ENCODE measurements at regions of chr12 and their contacts with region 1.

Region 1: GRCh38 chr12:45990468-45991283 is at the start of gene SCAF11:
- DNase-seq: peak; percentile 100
- H3K4me3 Mint-ChIP-seq: peak within 1 kb of the TSS; percentile 94
- H3K27ac Mint-ChIP-seq: peak within 1 kb of the TSS; percentile 99
- H3K4me1 Mint-ChIP-seq: peaks cover 36% of the 10 kb centered on the region
- H3K27me3 Mint-ChIP-seq: no peaks in the 10 kb centered on the region
- total RNA-seq, gene SCAF11: 95.0 to 97.7 TPM

Region 2: GRCh38 chr12:45518291-45519235 is 472.1 kb before region 1 on chr12:
- CTCF ChIA-PET with region 1: no interaction called
- intact Hi-C with region 1: loop called (anchors 1 kb)
- DNase-seq: peak; percentile 83
- H3K4me3 Mint-ChIP-seq: peak overlapping the region; percentile 40
- H3K27ac Mint-ChIP-seq: peak overlapping the region; percentile 85
- H3K4me1 Mint-ChIP-seq: peaks cover 12% of the 10 kb centered on the region
- H3K27me3 Mint-ChIP-seq: no peaks in the 10 kb centered on the region

Region 3: DNA sequence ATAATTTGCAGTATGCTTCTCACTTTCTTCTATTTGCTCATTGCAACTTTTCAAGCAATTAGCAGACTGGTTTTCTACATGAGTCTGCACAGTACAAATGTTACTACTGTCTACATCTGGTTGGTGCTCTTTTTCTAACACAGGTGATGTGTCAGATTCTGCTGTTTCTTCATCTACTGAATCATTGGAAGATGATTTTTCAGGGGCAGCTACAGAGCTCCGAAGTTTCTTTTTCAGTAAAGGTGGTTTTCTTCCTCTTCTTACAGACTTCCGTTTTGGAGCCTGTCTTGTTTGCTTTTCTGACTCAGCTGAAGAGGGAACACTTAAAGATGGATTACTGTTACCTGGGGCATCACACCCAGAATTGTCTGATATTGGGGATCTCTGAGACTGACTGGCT is 62.4 kb before region 1 on chr12:
- CTCF ChIA-PET with region 1: no interaction called
- intact Hi-C with region 1: loop called (anchors 2 kb)
- DNase-seq: no peak
- H3K4me3 Mint-ChIP-seq: no peak overlapping the region
- H3K27ac Mint-ChIP-seq: peak overlapping the region; percentile 52
- H3K4me1 Mint-ChIP-seq: peaks cover 11% of the 10 kb centered on the region
- H3K27me3 Mint-ChIP-seq: no peaks in the 10 kb centered on the region

Region 4: DNA sequence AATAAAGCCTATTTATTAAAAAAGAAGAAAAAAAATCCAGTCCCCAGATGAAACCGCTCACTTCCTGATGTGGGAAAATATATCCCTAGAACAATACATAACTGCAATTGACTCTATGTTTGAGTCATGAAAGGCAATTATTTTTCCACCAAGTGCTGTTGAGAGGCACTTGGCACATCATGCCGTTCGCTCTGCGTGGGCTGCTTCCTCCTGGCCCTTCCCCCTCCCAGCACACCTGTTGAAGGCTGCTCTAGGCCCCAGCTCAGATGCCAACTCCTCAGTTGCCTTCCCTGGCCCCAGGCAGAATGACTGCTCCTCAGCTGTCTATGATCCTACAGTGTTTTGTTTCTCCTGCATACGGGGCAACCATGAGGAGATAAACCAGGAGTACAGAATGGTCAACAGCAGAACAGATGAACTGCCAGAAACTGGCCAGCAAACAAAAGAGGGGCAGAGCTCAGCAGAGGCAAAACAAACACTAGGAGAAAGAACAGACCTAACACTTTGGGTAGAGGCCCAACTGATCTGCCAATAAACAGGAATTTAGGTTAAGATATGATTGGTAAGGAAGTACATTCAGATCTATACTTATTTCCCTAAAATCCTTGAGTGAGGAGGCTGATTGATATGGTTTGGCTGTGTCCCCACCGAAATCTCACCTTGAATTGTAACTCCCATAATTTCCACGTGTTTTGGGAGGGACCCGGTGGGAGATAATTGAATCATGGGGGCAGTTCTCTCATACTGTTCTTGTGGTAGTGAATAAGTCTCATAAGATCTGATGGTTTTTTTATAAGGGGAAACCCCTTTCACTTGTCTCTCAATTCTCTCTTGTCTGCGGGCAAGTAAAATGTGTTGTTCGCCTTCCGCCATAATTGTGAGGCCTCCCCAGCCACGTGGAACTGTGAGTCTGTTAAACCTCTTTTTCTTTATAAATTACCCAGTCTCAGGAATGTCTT is 219.5 kb after region 1 on chr12:
- CTCF ChIA-PET with region 1: interaction called, 4 read pairs
- intact Hi-C with region 1: loop called (anchors 1 kb)
- DNase-seq: peak; percentile 87
- H3K4me3 Mint-ChIP-seq: peak overlapping the region; percentile 60
- H3K27ac Mint-ChIP-seq: peak overlapping the region; percentile 99
- H3K4me1 Mint-ChIP-seq: peaks cover 84% of the 10 kb centered on the region
- H3K27me3 Mint-ChIP-seq: no peaks in the 10 kb centered on the region

Region 5: GRCh38 chr12:46382964-46383653 is 392.4 kb after region 1 on chr12:
- CTCF ChIA-PET with region 1: no interaction called
- intact Hi-C with region 1: loop called (anchors 1 kb)
- DNase-seq: peak; percentile 96
- H3K4me3 Mint-ChIP-seq: peak overlapping the region; percentile 77
- H3K27ac Mint-ChIP-seq: peak overlapping the region; percentile 87
- H3K4me1 Mint-ChIP-seq: peaks cover 38% of the 10 kb centered on the region
- H3K27me3 Mint-ChIP-seq: no peaks in the 10 kb centered on the region

Region 6: DNA sequence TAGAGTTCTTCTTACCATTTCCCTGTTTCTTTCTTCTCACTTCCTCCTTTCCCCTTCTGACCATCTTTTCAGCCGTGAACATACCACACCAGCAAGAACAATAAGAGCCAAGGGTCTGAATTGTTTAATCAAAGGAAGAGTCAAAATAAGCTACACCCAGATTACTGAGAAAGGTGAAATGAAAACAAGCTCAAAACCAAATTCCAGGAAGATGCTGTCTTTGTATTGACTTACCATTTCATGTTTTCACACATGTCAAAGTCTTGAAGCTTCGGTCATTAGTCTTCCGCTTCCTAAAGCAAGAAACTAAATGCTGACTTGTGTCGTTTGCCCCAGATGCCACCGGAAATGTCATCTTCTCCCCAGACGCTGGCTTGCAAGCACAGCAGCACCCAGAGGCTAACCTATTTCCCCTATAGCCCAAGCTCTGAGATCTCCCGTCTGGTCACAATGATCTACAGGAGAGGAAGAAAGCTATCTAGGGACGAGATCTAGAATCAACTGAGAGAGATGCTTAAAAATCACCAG is 1225.5 kb after region 1 on chr12:
- CTCF ChIA-PET with region 1: no interaction called
- intact Hi-C with region 1: loop called (anchors 5 kb)
- DNase-seq: peak; percentile 83
- H3K4me3 Mint-ChIP-seq: peak overlapping the region; percentile 94
- H3K27ac Mint-ChIP-seq: peak overlapping the region; percentile 100
- H3K4me1 Mint-ChIP-seq: peaks cover 12% of the 10 kb centered on the region
- H3K27me3 Mint-ChIP-seq: no peaks in the 10 kb centered on the region